ENCODE measurements at regions of chr5 and their contacts with region 1.

Region 1: GRCh38 chr5:61162010-61162831 is at the start of gene SMIM15:
- DNase-seq: peak; percentile 96
- total RNA-seq, gene SMIM15: 35.9 to 39.3 TPM

Region 2: GRCh38 chr5:60161340-60161934 is 1000.8 kb before region 1 on chr5:
- intact Hi-C with region 1: no loop called
- DNase-seq: no peak

Region 3: GRCh38 chr5:60687927-60688720 is 474.1 kb before region 1 on chr5:
- intact Hi-C with region 1: no loop called
- DNase-seq: no peak

Region 4: GRCh38 chr5:61301341-61302199 is 139.3 kb after region 1 on chr5:
- intact Hi-C with region 1: loop called in 1 of 2 experiments (anchors 10 kb)
- DNase-seq: peak; percentile 90

Region 5: DNA sequence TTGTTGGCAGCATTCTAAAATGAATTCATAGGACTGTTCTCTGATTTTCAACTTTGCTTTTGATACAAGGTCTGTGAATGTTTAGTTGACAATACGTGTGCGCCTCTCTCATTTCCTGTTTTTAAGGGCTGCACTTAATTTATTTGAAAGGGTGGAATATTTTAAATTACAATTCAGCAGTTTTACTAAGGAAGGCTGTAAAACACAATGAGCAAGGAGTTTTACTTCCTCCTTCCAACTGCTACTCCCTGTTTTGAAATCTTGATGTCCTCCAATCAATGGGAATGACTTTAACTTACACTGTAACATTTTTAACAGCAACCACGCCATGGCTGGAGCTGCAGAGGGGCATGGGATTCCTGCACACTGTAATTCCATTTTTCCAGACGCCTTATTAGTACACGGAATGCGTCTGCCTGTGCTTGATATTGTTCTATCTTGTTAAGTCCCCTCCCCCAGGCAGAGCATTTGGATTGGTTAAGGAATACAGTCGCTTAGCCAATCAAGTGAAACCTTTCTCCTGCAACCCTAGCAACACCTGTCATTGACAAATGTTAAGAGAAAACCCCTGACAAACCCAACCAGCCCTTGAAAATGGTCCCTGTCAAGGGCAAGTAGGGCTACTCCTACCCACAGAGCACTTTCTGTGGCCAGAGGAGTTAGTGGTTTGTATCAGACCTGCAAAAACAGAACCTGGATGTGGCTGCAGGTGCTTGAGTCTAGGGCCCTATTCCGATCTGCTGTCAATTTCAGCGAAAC is 157.3 kb after region 1 on chr5:
- intact Hi-C with region 1: loop called in 1 of 2 experiments (anchors 10 kb)
- DNase-seq: no peak

Measured in posterior vena cava (tissue), 2 donors.